Naive thymus-derived CD4-positive, alpha-beta T cell (primary cell): ENCODE measurements at regions of chr10 and their contacts with region 1.

Region 1: GRCh38 chr10:21989453-21990154 is 13.9 kb downstream of the DNAJC1 start:
- DNase-seq: peak in 7 of 9 donors; percentile 14 to 52 (median 36)
- ATAC-seq: peak; percentile 89
- H3K4me3 ChIP-seq: no peak overlapping the region
- H3K4me3 Mint-ChIP-seq: no peak overlapping the region
- H3K27ac ChIP-seq: no peak overlapping the region
- H3K27ac Mint-ChIP-seq: peak overlapping the region in 2 of 9 donors; percentile 10 to 47
- H3K4me1 ChIP-seq: no peaks in the 10 kb centered on the region
- H3K4me1 Mint-ChIP-seq: peaks cover 0 to 14% (median 5%) of the 10 kb centered on the region in 7 donors
- H3K27me3 ChIP-seq: no peaks in the 10 kb centered on the region
- H3K27me3 Mint-ChIP-seq: no peaks in the 10 kb centered on the region

Region 2: DNA sequence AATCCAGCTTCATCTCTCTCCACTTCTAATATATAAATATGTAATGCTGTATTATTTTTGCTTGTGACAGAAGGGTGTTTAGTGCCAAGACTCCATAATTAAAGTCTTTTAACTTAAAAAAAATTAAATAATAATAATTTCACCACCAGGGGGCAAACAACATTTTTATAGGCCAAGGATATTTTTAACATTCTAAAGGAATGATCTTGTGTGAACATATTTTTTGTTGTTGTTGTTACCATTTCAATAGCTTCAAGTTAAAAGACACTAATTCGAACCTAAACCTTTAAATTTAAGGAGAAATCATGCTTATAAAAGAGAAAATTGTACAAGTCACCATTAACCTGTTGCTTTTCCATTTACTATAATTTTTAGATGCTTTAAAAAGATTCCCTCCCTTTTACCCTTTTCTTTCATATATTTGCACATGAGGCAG is 21.4 kb after region 1 on chr10:
- CTCF ChIA-PET with region 1: interaction called, 15 read pairs
- POLR2A ChIA-PET with region 1: no interaction called
- intact Hi-C with region 1: loop called in 1 of 2 experiments (anchors 1 kb)
- DNase-seq: peak in 6 of 9 donors; percentile 21 to 52 (median 45)
- ATAC-seq: no peak
- H3K4me3 ChIP-seq: no peak overlapping the region
- H3K4me3 Mint-ChIP-seq: no peak overlapping the region
- H3K27ac ChIP-seq: no peak overlapping the region
- H3K27ac Mint-ChIP-seq: no peak overlapping the region
- H3K4me1 ChIP-seq: no peaks in the 10 kb centered on the region
- H3K4me1 Mint-ChIP-seq: peaks cover 0 to 6% (median 0%) of the 10 kb centered on the region in 7 donors
- H3K27me3 ChIP-seq: no peaks in the 10 kb centered on the region
- H3K27me3 Mint-ChIP-seq: peaks cover 0 to 23% (median 5%) of the 10 kb centered on the region in 5 donors

Region 3: GRCh38 chr10:22420787-22421517 is 431.3 kb after region 1 on chr10:
- CTCF ChIA-PET with region 1: interaction called, 11 read pairs
- POLR2A ChIA-PET with region 1: interaction called, 3 read pairs
- intact Hi-C with region 1: loop called (anchors 1 kb)
- DNase-seq: peak in 4 of 9 donors; percentile 15 to 41 (median 40)
- ATAC-seq: peak; percentile 54
- H3K4me3 ChIP-seq: no peak overlapping the region
- H3K4me3 Mint-ChIP-seq: no peak overlapping the region
- H3K27ac ChIP-seq: no peak overlapping the region
- H3K27ac Mint-ChIP-seq: no peak overlapping the region
- H3K4me1 ChIP-seq: no peaks in the 10 kb centered on the region
- H3K4me1 Mint-ChIP-seq: peaks cover 0 to 3% (median 0%) of the 10 kb centered on the region in 7 donors
- H3K27me3 ChIP-seq: no peaks in the 10 kb centered on the region
- H3K27me3 Mint-ChIP-seq: peaks cover 0 to 4% (median 0%) of the 10 kb centered on the region in 5 donors

Region 4: GRCh38 chr10:22573820-22574569 is 584.4 kb after region 1 on chr10:
- CTCF ChIA-PET with region 1: interaction called, 14 read pairs
- POLR2A ChIA-PET with region 1: no interaction called
- intact Hi-C with region 1: loop called in 1 of 2 experiments (anchors 2 kb)
- DNase-seq: peak in 5 of 9 donors; percentile 16 to 26 (median 24)
- ATAC-seq: peak; percentile 67
- H3K4me3 ChIP-seq: no peak overlapping the region
- H3K4me3 Mint-ChIP-seq: peak overlapping the region in 2 of 10 donors; percentile 24 to 66
- H3K27ac ChIP-seq: no peak overlapping the region
- H3K27ac Mint-ChIP-seq: peak overlapping the region; percentile 8 to 91 (median 62)
- H3K4me1 ChIP-seq: peaks cover 0 to 33% of the 10 kb centered on the region in 2 donors
- H3K4me1 Mint-ChIP-seq: peaks cover 32 to 80% (median 62%) of the 10 kb centered on the region in 7 donors
- H3K27me3 ChIP-seq: no peaks in the 10 kb centered on the region
- H3K27me3 Mint-ChIP-seq: no peaks in the 10 kb centered on the region

Region 5: GRCh38 chr10:22615819-22616499 is 626.4 kb after region 1 on chr10:
- CTCF ChIA-PET with region 1: no interaction called
- POLR2A ChIA-PET with region 1: no interaction called
- intact Hi-C with region 1: no loop called
- DNase-seq: no peak
- ATAC-seq: peak; percentile 45
- H3K4me3 ChIP-seq: peak overlapping the region; percentile 38
- H3K4me3 Mint-ChIP-seq: peak overlapping the region; percentile 5 to 72 (median 26)
- H3K27ac ChIP-seq: peak overlapping the region; percentile 16
- H3K27ac Mint-ChIP-seq: peak overlapping the region; percentile 26 to 94 (median 75)
- H3K4me1 ChIP-seq: peaks cover 77 to 98% of the 10 kb centered on the region in 2 donors
- H3K4me1 Mint-ChIP-seq: peaks cover 75 to 100% (median 96%) of the 10 kb centered on the region in 7 donors
- H3K27me3 ChIP-seq: no peaks in the 10 kb centered on the region
- H3K27me3 Mint-ChIP-seq: no peaks in the 10 kb centered on the region

Region 6: DNA sequence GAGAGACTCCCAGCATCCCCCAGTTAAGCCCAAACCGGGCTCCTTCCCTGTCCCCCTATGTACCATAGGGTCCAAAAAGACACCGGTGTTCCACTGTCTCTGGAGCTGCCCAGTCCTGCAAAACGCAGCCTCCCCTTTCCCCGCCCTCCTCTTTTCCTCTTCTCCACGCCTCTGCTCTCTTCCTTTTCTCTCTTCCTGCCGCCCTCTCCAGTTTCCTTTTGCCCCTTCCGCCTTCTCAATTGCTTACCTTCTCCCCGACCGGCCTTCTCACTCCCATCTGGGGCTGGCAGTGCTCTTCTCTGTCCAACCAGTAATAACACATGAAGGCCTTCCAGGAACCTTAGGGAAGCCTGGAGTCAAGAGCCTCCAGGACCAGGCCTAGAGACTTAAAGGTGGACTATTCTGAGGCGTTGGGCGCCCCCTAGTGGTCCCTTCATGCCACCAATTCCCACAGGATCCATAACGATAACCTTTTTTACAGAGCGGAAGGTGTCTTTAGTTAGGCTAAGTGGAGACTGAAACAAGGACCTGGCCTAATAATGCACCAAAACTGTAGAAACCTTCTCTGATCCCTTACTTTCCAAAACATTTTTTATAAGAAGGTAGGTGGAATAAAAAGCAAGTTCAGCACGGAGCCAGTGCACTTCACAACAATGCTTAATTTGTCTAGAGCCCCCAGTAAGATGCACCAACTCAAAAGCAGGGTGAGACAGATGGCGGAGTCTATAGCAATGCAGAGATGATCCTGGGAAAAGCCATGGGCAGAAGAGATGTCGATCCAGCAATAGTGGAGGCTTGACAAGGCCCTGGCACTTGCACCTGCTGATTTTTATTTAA is 1078.6 kb after region 1 on chr10:
- CTCF ChIA-PET with region 1: interaction called, 3 read pairs
- POLR2A ChIA-PET with region 1: no interaction called
- intact Hi-C with region 1: loop called (anchors 1 kb)
- DNase-seq: peak; percentile 23 to 66 (median 48)
- ATAC-seq: peak; percentile 78
- H3K4me3 ChIP-seq: no peak overlapping the region
- H3K4me3 Mint-ChIP-seq: no peak overlapping the region
- H3K27ac ChIP-seq: no peak overlapping the region
- H3K27ac Mint-ChIP-seq: no peak overlapping the region
- H3K4me1 ChIP-seq: no peaks in the 10 kb centered on the region
- H3K4me1 Mint-ChIP-seq: peaks cover 0 to 2% (median 0%) of the 10 kb centered on the region in 7 donors
- H3K27me3 ChIP-seq: no peaks in the 10 kb centered on the region
- H3K27me3 Mint-ChIP-seq: peaks cover 0 to 6% (median 2%) of the 10 kb centered on the region in 5 donors

Region 7: GRCh38 chr10:23314835-23315239 is 1325.2 kb after region 1 on chr10:
- CTCF ChIA-PET with region 1: no interaction called
- POLR2A ChIA-PET with region 1: no interaction called
- intact Hi-C with region 1: loop called in 1 of 2 experiments (anchors 5 kb)
- DNase-seq: peak in 7 of 9 donors; percentile 44 to 73 (median 70)
- ATAC-seq: peak; percentile 73
- H3K4me3 ChIP-seq: no peak overlapping the region
- H3K4me3 Mint-ChIP-seq: no peak overlapping the region
- H3K27ac ChIP-seq: no peak overlapping the region
- H3K27ac Mint-ChIP-seq: no peak overlapping the region
- H3K4me1 ChIP-seq: no peaks in the 10 kb centered on the region
- H3K4me1 Mint-ChIP-seq: peaks cover 0 to 5% (median 0%) of the 10 kb centered on the region in 7 donors
- H3K27me3 ChIP-seq: no peaks in the 10 kb centered on the region
- H3K27me3 Mint-ChIP-seq: peaks cover 0 to 6% (median 0%) of the 10 kb centered on the region in 5 donors